ENCODE measurements at regions of chr19 and their contacts with region 1.

Region 1: GRCh38 chr19:3062168-3063102 is at the start of gene TLE5:
- DNase-seq: peak; percentile 71
- ATAC-seq: peak; percentile 66
- H3K4me3 Mint-ChIP-seq: peak within 1 kb of the TSS; percentile 76
- H3K27ac Mint-ChIP-seq: peak within 1 kb of the TSS; percentile 96
- H3K4me1 Mint-ChIP-seq: peaks cover 42% of the 10 kb centered on the region
- H3K27me3 Mint-ChIP-seq: no peaks in the 10 kb centered on the region
- total RNA-seq, gene TLE5: 635 to 655 TPM

Region 2: DNA sequence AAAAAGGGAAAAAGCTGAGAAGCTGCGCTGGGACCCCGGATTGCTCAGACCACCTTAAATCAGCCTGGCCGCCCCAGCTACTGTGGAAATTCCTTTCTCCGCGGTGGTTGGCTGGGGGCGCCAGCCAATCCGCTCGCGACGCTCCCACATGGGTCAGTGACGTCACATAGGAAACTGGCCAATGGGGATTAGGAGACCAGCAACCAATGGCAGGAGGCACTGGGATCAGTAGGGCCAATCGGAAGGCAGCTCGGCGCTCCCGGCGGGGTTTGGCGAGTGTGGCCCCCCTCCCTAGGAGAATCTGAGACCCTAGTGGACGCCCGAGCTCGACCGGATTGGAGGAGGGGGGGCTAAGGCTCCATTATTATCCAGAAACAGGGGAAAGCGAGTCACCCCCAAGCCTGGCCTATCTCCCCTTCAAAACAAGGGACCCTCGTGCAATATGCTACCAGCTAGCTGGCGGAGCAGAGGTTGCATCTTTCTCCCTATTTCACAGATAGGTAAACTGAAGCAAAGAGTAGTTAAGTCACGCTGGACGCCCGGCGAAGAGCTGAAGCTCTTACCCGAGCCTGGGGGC is 26.8 kb before region 1 on chr19:
- CTCF ChIA-PET with region 1: interaction called, 11 read pairs
- POLR2A ChIA-PET with region 1: interaction called, 23 read pairs
- DNase-seq: peak; percentile 98
- ATAC-seq: peak; percentile 94
- H3K4me3 Mint-ChIP-seq: peak overlapping the region; percentile 87
- H3K27ac Mint-ChIP-seq: peak overlapping the region; percentile 95
- H3K4me1 Mint-ChIP-seq: peaks cover 30% of the 10 kb centered on the region
- H3K27me3 Mint-ChIP-seq: peaks cover 30% of the 10 kb centered on the region

Region 3: DNA sequence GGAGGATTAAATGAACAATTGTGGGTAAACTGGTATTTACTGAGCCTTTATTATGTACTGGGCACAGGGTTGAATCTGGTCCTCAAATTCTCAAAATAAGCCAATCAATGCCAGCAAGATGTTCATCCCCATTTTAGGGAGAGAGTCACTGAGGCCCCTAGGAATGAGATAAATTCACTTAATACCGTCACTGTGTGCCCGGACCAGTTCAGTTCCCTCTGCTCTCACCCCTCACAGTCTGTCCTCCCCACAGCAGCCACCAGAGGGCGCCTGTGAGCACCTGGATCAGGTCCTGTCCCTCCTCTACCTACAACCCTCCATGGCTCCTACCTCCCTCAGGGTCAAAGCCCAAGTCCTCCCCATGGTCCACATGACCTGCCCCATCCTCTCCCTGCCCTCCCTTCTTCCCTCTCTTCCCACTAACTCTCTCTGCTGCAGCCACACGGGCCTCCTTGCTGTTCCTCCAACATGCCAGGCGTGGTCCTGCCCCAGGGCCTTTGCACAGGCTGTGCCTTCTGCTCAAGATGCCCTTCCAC is 262.0 kb after region 1 on chr19:
- CTCF ChIA-PET with region 1: no interaction called
- POLR2A ChIA-PET with region 1: no interaction called
- DNase-seq: peak; percentile 83
- ATAC-seq: peak; percentile 71
- H3K4me3 Mint-ChIP-seq: no peak overlapping the region
- H3K27ac Mint-ChIP-seq: no peak overlapping the region
- H3K4me1 Mint-ChIP-seq: no peaks in the 10 kb centered on the region
- H3K27me3 Mint-ChIP-seq: peaks cover 2% of the 10 kb centered on the region